T-cell (primary cell): ENCODE measurements at regions of chr9 and their contacts with region 1.

Region 1: DNA sequence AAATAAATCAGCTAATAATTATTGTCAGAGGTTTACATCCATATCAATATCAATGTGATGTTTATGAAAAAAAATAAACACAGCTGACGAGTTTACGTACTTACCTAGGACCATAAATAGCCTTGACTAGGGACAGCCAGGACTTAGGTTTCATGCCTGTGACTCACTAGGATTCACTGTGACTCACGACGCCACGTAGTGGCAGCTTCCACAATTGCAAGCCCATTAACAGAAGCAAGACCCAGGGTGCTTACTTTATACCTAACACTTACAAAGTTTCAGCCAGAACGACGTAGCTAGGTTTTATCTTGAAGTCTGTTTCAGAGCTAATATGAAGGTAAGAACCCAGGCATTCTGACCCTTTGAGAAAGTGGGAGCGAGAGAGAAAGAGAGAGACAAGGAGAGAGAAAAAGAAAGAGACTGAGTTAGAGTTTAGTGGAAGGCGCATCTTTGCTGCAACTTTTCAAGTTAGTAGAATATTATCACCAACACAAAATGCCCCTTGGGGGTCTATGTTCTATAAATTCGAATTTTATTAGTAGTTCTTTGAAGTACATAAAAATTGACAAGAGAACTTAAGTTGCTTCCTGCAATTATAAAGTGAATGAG is 191.2 kb downstream of the GNA14 start:
- DNase-seq: peak; percentile 42 to 83 (median 68)
- ATAC-seq: peak; percentile 67 to 77 (median 74)
- H3K4me3 ChIP-seq: no peak overlapping the region
- H3K4me3 Mint-ChIP-seq: no peak overlapping the region
- H3K27ac ChIP-seq: no peak overlapping the region
- H3K27ac Mint-ChIP-seq: no peak overlapping the region
- H3K4me1 ChIP-seq: peaks cover 2 to 4% of the 10 kb centered on the region in 2 experiments
- H3K4me1 Mint-ChIP-seq: peaks cover 17 to 33% (median 25%) of the 10 kb centered on the region in 3 donors
- H3K27me3 ChIP-seq: peaks cover 0 to 6% of the 10 kb centered on the region in 2 experiments
- H3K27me3 Mint-ChIP-seq: peaks cover 0 to 3% of the 10 kb centered on the region in 2 donors

Region 2: DNA sequence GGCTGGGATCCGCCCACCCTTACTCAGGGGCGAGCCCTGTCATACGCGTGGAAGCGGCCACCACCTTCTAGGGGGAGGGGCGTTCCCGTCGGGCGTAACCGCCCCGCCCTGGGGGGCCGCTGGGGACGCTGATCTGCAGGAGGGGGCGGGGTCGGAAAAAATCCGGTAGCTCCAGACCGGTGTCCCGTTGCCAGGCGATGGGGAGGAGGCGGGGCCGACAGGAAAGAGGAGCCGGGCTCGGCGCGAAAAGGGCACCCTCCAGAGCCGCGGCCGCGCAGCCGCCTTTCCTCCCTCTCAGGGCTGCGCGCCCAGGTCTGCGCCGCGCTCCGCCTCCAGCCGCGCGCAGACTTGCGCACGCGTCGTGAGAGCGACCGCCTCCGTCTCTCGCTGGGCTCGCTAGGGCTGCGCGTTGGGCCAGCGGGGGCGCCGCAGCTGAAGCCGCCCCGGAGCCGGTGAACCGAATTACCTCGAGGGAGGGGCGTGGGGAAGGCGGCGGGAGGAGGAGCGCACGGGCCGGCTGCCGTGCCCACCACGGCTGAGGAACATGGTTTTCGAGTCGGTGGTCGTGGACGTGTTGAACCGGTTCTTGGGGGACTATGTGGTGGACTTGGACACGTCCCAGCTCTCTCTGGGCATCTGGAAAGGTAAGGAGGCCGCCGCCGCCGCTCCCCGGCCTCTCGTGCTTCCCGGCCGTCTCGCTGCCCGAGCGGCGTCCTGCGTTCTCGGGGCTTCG is 279.6 kb before region 1 on chr9 and contains the start of gene VPS13A:
- CTCF ChIA-PET with region 1: no interaction called
- POLR2A ChIA-PET with region 1: no interaction called
- DNase-seq: peak; percentile 76 to 95 (median 84)
- ATAC-seq: peak; percentile 87 to 92 (median 91)
- H3K4me3 ChIP-seq: peak within 1 kb of the TSS; percentile 80 to 96
- H3K4me3 Mint-ChIP-seq: peak within 1 kb of the TSS; percentile 95 to 97 (median 97)
- H3K27ac ChIP-seq: peak within 1 kb of the TSS; percentile 86
- H3K27ac Mint-ChIP-seq: peak within 1 kb of the TSS; percentile 93 to 94
- H3K4me1 ChIP-seq: peaks cover 3 to 16% of the 10 kb centered on the region in 2 experiments
- H3K4me1 Mint-ChIP-seq: peaks cover 35 to 38% (median 36%) of the 10 kb centered on the region in 3 donors
- H3K27me3 ChIP-seq: no peaks in the 10 kb centered on the region
- H3K27me3 Mint-ChIP-seq: no peaks in the 10 kb centered on the region
- total RNA-seq, gene VPS13A: 32.1 to 49.3 (median 36.5) TPM

Region 3: DNA sequence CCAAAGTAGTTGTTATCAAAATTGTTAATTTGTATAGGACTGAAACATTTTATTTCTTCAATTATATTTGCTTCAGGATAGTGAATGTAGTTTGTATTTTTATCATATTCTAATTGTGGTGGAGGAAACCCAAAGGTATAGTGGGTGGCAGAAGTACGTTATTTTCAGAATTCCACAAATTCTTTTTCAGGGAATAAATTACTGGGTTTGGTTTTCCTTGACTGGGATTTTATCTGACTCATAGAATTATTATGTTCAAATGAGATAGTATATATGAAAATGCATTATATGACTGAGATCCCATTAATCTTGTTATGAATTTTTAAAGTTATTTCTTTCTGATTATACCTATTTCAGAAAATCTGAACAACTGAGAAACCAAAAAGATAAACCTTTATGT is 205.9 kb before region 1 on chr9:
- CTCF ChIA-PET with region 1: no interaction called
- POLR2A ChIA-PET with region 1: interaction called in 1 of 2 experiments, 15 read pairs
- DNase-seq: no peak
- ATAC-seq: no peak
- H3K4me3 ChIP-seq: no peak overlapping the region
- H3K4me3 Mint-ChIP-seq: no peak overlapping the region
- H3K27ac ChIP-seq: no peak overlapping the region
- H3K27ac Mint-ChIP-seq: no peak overlapping the region
- H3K4me1 ChIP-seq: no peaks in the 10 kb centered on the region
- H3K4me1 Mint-ChIP-seq: no peaks in the 10 kb centered on the region
- H3K27me3 ChIP-seq: no peaks in the 10 kb centered on the region
- H3K27me3 Mint-ChIP-seq: no peaks in the 10 kb centered on the region

Region 4: GRCh38 chr9:77433675-77434445 is 23.1 kb before region 1 on chr9:
- CTCF ChIA-PET with region 1: interaction called, 6 to 15 read pairs
- POLR2A ChIA-PET with region 1: no interaction called
- DNase-seq: peak in 32 of 35 experiments; percentile 9 to 64 (median 36)
- ATAC-seq: peak; percentile 80 to 94 (median 86)
- H3K4me3 ChIP-seq: no peak overlapping the region
- H3K4me3 Mint-ChIP-seq: no peak overlapping the region
- H3K27ac ChIP-seq: no peak overlapping the region
- H3K27ac Mint-ChIP-seq: no peak overlapping the region
- H3K4me1 ChIP-seq: no peaks in the 10 kb centered on the region
- H3K4me1 Mint-ChIP-seq: peaks cover 3 to 6% (median 3%) of the 10 kb centered on the region in 3 donors
- H3K27me3 ChIP-seq: peaks cover 0 to 12% of the 10 kb centered on the region in 2 experiments
- H3K27me3 Mint-ChIP-seq: peaks cover 0 to 2% of the 10 kb centered on the region in 2 donors

Region 5: DNA sequence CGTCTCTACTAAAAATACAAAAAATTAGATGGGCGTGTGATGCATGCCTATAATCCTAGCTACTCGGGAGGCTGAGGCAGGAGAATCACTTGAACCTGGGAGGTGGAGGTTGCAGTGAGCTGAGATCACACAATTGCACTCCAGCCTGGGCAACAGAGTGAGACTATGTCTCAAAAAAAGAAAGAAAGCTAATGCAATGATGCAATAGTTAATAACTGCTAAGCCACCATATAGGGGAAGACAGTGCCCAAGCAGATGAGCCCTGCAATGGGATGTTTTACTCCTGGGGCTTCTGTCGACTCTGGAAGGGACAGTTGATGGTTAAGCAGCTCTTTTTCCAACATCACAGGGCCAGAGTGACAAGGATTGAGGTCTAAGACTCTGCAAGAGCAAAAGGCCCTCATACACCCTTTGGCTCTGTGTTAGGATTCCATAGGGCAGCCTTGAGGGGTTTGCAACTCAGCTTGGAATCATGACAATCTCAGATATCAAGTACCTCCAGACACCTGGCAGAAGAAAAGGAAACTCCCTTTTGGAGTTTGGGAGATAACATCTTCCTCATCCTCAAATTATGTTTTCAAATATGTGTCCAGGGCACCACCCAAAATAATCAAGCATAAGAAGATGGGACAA is 14.6 kb before region 1 on chr9:
- CTCF ChIA-PET with region 1: interaction called, 4 to 12 read pairs
- POLR2A ChIA-PET with region 1: interaction called in 1 of 2 experiments, 3 read pairs
- DNase-seq: no peak
- ATAC-seq: no peak
- H3K4me3 ChIP-seq: no peak overlapping the region
- H3K4me3 Mint-ChIP-seq: no peak overlapping the region
- H3K27ac ChIP-seq: no peak overlapping the region
- H3K27ac Mint-ChIP-seq: no peak overlapping the region
- H3K4me1 ChIP-seq: no peaks in the 10 kb centered on the region
- H3K4me1 Mint-ChIP-seq: no peaks in the 10 kb centered on the region
- H3K27me3 ChIP-seq: peaks cover 0 to 6% of the 10 kb centered on the region in 2 experiments
- H3K27me3 Mint-ChIP-seq: peaks cover 0 to 4% of the 10 kb centered on the region in 2 donors

Region 6: GRCh38 chr9:77469515-77470231 is 12.7 kb after region 1 on chr9:
- CTCF ChIA-PET with region 1: interaction called, 9 to 11 read pairs
- POLR2A ChIA-PET with region 1: interaction called in 1 of 2 experiments, 10 read pairs
- DNase-seq: no peak
- ATAC-seq: no peak
- H3K4me3 ChIP-seq: no peak overlapping the region
- H3K4me3 Mint-ChIP-seq: no peak overlapping the region
- H3K27ac ChIP-seq: no peak overlapping the region
- H3K27ac Mint-ChIP-seq: no peak overlapping the region
- H3K4me1 ChIP-seq: no peaks in the 10 kb centered on the region
- H3K4me1 Mint-ChIP-seq: no peaks in the 10 kb centered on the region
- H3K27me3 ChIP-seq: peaks cover 0 to 5% of the 10 kb centered on the region in 2 experiments
- H3K27me3 Mint-ChIP-seq: peaks cover under 1 to 1% of the 10 kb centered on the region in 2 donors

Region 7: GRCh38 chr9:77475641-77476473 is 18.9 kb after region 1 on chr9:
- CTCF ChIA-PET with region 1: interaction called, 5 to 9 read pairs
- POLR2A ChIA-PET with region 1: interaction called in 1 of 2 experiments, 10 read pairs
- DNase-seq: peak in 33 of 35 experiments; percentile 10 to 61 (median 34)
- ATAC-seq: peak; percentile 92 to 99 (median 98)
- H3K4me3 ChIP-seq: no peak overlapping the region
- H3K4me3 Mint-ChIP-seq: peak overlapping the region in 2 of 3 donors; percentile 18 to 55
- H3K27ac ChIP-seq: peak overlapping the region; percentile 78
- H3K27ac Mint-ChIP-seq: peak overlapping the region; percentile 92 to 97
- H3K4me1 ChIP-seq: peaks cover 15 to 18% of the 10 kb centered on the region in 2 experiments
- H3K4me1 Mint-ChIP-seq: peaks cover 20 to 24% (median 24%) of the 10 kb centered on the region in 3 donors
- H3K27me3 ChIP-seq: no peaks in the 10 kb centered on the region
- H3K27me3 Mint-ChIP-seq: no peaks in the 10 kb centered on the region